ENCODE measurements at regions of chr12 and their contacts with region 1.

Region 1: DNA sequence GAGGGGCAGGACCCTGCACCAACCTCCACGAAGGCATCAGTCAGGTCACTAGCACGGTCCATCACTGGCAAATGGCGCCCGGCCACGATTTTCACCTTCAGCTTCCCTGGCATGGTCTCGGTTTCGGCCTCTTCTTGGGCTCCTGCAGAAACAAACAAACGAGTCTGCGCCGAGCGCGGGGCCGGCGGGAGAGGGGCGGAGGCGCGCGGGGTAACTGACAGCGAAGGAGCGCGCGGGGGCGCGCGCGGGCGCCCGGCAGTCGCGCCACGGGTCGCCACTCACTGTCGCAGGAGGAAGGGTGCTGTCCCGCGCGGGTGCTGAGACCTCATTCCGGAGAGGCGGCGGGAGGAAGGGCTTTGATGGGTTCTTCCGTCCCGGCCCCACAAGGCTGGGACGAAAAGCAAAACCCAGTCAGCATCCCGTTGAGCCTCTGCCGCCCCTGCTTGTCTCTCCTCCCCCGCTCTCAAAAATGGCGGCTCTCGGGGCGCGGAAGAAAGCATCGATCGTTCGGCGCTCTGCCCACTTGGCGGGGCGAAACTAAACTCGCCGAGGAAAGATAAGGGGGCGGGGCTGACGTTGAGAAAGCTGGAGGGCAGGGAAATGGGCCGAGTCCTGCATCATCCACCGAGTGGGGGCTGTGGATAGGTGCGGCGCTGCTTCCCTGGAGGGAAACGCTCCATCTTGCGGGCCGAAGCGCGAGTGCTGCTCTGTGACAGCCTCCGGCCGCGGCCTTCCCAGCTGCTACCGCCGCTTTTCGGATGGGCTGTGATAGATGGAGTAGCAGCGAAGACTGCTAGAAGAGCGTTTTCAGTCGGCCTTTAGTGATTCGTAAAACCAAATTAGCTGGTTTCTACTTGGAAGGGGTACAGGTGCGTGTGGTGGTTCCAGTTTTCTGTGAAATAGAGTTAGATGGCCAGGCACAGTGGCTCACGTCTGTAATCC is at the start of gene C2CD5:
- DNase-seq: peak; percentile 99
- ATAC-seq: peak; percentile 96
- H3K4me3 ChIP-seq: peak within 1 kb of the TSS; percentile 57 to 86
- H3K27ac ChIP-seq: peak within 1 kb of the TSS; percentile 24 to 87
- H3K4me1 ChIP-seq: peaks cover 0 to 5% of the 10 kb centered on the region in 2 donors
- H3K27me3 ChIP-seq: no peaks in the 10 kb centered on the region
- total RNA-seq, gene C2CD5: 41.0 to 54.1 TPM

Region 2: DNA sequence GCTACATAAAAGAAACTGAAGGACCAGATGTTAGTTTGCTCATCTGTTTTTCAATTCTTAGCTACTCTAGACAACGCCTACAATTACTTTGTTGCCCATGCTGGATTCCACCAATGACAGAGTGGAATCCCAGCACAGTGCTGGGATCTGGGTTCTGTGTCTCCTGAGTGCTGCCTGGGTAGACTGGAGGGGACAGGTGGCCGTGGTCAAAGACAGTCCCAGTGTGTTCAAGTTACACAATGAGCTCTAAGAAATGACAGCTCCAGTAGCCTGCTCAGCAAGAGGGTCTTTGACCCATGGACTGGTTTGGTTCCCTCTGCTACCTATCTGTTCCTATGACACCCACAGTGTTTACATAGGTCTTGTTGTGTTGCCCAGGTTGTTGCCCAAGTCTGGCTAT is 38.5 kb before region 1 on chr12:
- intact Hi-C with region 1: no loop called
- DNase-seq: no peak
- ATAC-seq: no peak
- H3K4me3 ChIP-seq: no peak overlapping the region
- H3K27ac ChIP-seq: no peak overlapping the region
- H3K4me1 ChIP-seq: no peaks in the 10 kb centered on the region
- H3K27me3 ChIP-seq: no peaks in the 10 kb centered on the region

Region 3: GRCh38 chr12:22624870-22625761 is 80.8 kb after region 1 on chr12 and contains the start of gene ETNK1:
- intact Hi-C with region 1: loop called (anchors 5 kb)
- DNase-seq: peak; percentile 97 to 98
- ATAC-seq: peak; percentile 98
- H3K4me3 ChIP-seq: peak within 1 kb of the TSS; percentile 54 to 70
- H3K27ac ChIP-seq: peak within 1 kb of the TSS; percentile 63 to 91
- H3K4me1 ChIP-seq: peaks cover 0 to 4% of the 10 kb centered on the region in 2 donors
- H3K27me3 ChIP-seq: no peaks in the 10 kb centered on the region
- total RNA-seq, gene ETNK1: 70.0 to 77.6 TPM

Region 4: DNA sequence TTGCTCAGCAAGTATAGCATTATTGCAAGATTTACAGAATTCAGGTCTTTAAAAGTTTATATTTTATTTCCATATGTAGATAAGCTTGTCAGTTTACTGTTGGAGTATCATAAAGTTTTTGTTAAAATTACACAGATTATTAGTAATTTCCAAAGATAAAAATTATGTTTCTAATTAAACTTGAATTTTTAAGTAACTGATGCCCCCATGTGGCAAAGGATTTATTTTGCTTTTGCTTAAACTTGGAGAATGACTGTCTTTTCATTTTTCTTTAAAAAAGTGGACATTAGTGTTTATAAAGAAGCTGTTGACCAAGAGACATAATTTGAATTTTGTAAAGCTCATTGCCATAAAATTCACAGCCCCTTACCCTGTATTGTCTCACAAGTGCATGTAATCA is 126.5 kb after region 1 on chr12:
- intact Hi-C with region 1: loop called in 1 of 2 experiments (anchors 5 kb)
- DNase-seq: no peak
- ATAC-seq: no peak
- H3K4me3 ChIP-seq: no peak overlapping the region
- H3K27ac ChIP-seq: no peak overlapping the region
- H3K4me1 ChIP-seq: no peaks in the 10 kb centered on the region
- H3K27me3 ChIP-seq: no peaks in the 10 kb centered on the region

Region 5: GRCh38 chr12:22781339-22781738 is 237.0 kb after region 1 on chr12:
- intact Hi-C with region 1: no loop called
- DNase-seq: no peak
- ATAC-seq: no peak
- H3K4me3 ChIP-seq: no peak overlapping the region
- H3K27ac ChIP-seq: no peak overlapping the region
- H3K4me1 ChIP-seq: peaks cover 1 to 2% of the 10 kb centered on the region in 2 donors
- H3K27me3 ChIP-seq: no peaks in the 10 kb centered on the region

Measured in aorta (tissue), 5 donors.